Activated CD8-positive, alpha-beta T cell treated with anti-CD3 and anti-CD28 coated beads, Interleukin-2, amount 10 ng/mL, durations not matched to agents 7 days and 5 days (primary cell): ENCODE measurements at regions of chr17 and their contacts with region 1.

Region 1: DNA sequence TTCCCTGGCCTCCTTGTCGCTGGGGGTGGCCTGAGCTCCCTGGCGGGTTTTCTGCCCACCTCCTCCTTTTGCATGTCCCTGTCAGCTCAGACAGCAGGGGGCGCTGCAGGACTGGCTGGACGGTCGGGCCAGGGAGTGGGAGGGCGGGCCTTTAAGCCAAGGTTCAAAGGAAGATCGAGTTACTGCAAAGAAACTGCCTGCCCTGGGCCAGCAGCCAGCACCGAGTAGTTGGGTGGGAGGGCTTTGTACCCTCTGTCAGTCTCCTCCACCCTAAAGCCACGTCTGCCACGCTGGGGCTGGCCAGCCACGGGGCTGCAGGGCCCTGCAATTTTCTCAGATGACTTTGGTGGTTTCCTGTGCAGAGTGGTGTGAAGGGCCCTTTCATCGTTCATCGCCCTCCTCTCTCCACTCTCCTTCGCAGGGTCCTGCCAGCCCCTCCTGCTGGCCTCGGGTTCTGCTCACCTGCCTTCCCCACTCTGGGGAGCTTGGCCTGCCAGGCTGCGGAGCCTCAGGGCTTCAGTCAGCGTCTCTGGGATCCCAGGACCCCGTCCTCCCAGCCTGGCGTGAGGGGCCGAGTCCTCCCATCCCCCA is 12.3 kb downstream of the GPR142 start:
- DNase-seq: peak; percentile 92
- ATAC-seq: peak; percentile 92
- H3K4me3 Mint-ChIP-seq: no peak overlapping the region
- H3K27ac Mint-ChIP-seq: no peak overlapping the region
- H3K4me1 Mint-ChIP-seq: peaks cover 13% of the 10 kb centered on the region
- H3K27me3 Mint-ChIP-seq: peaks cover 8% of the 10 kb centered on the region

Region 2: GRCh38 chr17:74408262-74408661 is 28.7 kb after region 1 on chr17:
- CTCF ChIA-PET with region 1: interaction called, 10 read pairs
- POLR2A ChIA-PET with region 1: interaction called, 5 read pairs
- DNase-seq: no peak
- ATAC-seq: no peak
- H3K4me3 Mint-ChIP-seq: no peak overlapping the region
- H3K27ac Mint-ChIP-seq: no peak overlapping the region
- H3K4me1 Mint-ChIP-seq: peaks cover 11% of the 10 kb centered on the region
- H3K27me3 Mint-ChIP-seq: peaks cover 3% of the 10 kb centered on the region

Region 3: GRCh38 chr17:74457146-74457819 is 77.7 kb after region 1 on chr17:
- CTCF ChIA-PET with region 1: interaction called, 68 read pairs
- POLR2A ChIA-PET with region 1: interaction called, 6 read pairs
- DNase-seq: peak; percentile 77
- ATAC-seq: peak; percentile 41
- H3K4me3 Mint-ChIP-seq: no peak overlapping the region
- H3K27ac Mint-ChIP-seq: no peak overlapping the region
- H3K4me1 Mint-ChIP-seq: peaks cover 33% of the 10 kb centered on the region
- H3K27me3 Mint-ChIP-seq: peaks cover 25% of the 10 kb centered on the region

Region 4: GRCh38 chr17:74493381-74493833 is 113.8 kb after region 1 on chr17:
- CTCF ChIA-PET with region 1: interaction called, 66 read pairs
- POLR2A ChIA-PET with region 1: no interaction called
- DNase-seq: peak; percentile 76
- ATAC-seq: peak; percentile 72
- H3K4me3 Mint-ChIP-seq: no peak overlapping the region
- H3K27ac Mint-ChIP-seq: no peak overlapping the region
- H3K4me1 Mint-ChIP-seq: peaks cover 13% of the 10 kb centered on the region
- H3K27me3 Mint-ChIP-seq: peaks cover 12% of the 10 kb centered on the region

Region 5: GRCh38 chr17:74601944-74602572 is 222.5 kb after region 1 on chr17:
- CTCF ChIA-PET with region 1: interaction called, 10 read pairs
- POLR2A ChIA-PET with region 1: no interaction called
- DNase-seq: peak; percentile 56
- ATAC-seq: peak; percentile 51
- H3K4me3 Mint-ChIP-seq: no peak overlapping the region
- H3K27ac Mint-ChIP-seq: peak overlapping the region; percentile 10
- H3K4me1 Mint-ChIP-seq: peaks cover 29% of the 10 kb centered on the region
- H3K27me3 Mint-ChIP-seq: peaks cover 34% of the 10 kb centered on the region